ENCODE measurements at regions of chr18 and their contacts with region 1.

Region 1: GRCh38 chr18:3245853-3246634 is 1.6 kb upstream of the MYL12A start:
- DNase-seq: peak; percentile 90 to 95
- ATAC-seq: peak; percentile 65 to 73 (median 70)
- H3K4me3 ChIP-seq: peak overlapping the region; percentile 85
- H3K27ac ChIP-seq: peak overlapping the region; percentile 99
- H3K4me1 ChIP-seq: peaks cover 42% of the 10 kb centered on the region
- H3K27me3 ChIP-seq: no peaks in the 10 kb centered on the region
- CTCF ChIP-seq: peak; percentile 97

Region 2: DNA sequence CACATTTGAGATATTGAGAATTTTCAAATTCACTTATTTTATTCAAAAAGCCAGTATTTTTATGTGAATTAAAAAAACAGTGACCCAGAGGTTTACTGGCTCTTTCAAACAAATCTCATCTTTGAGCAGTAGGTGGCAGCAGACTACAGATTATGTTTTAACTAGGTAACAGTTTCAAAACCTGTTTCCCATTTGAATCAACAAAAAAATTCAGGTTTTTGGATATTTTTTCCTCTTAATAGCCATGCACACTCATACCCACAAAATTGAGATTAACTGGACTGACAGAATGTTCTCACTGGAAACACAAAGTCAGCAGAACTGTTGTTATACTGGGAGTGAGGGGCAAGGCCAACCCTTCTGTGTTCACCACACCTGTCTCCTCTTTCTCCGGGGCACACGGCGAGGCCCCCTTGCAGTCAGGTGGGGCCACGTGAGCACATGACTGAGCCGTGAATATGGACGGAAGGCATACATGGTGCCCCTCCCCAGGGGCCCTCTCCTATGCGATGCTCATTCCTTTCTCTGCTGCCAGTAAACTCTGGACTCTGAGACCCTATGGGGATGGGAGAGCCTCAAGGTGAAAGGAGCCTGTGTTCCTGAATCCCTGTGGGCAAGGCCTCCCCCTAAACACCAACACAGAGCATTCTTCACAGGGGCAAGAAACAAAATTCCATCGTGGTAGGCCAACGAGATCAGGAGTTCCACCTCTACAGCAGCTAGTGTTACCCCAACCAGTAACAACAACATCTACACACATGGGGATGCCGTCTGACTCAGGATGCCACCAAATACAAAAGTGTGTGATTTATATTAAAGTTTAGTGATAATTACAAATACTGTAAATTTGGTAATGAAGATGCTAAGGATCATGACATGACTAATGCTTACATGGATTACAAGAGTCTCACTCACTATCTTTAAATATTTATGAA is 313.5 kb before region 1 on chr18:
- intact Hi-C with region 1: loop called in 1 of 2 experiments (anchors 2 kb)
- DNase-seq: no peak
- ATAC-seq: peak; percentile 49 to 82 (median 62)
- H3K4me3 ChIP-seq: no peak overlapping the region
- H3K27ac ChIP-seq: no peak overlapping the region
- H3K4me1 ChIP-seq: no peaks in the 10 kb centered on the region
- H3K27me3 ChIP-seq: no peaks in the 10 kb centered on the region
- CTCF ChIP-seq: peak; percentile 82

Region 3: GRCh38 chr18:3151399-3152264 is 94.4 kb before region 1 on chr18:
- intact Hi-C with region 1: loop called in 1 of 2 experiments (anchors 5 kb)
- DNase-seq: no peak
- ATAC-seq: peak in 1 of 4 donors; percentile 32
- H3K4me3 ChIP-seq: no peak overlapping the region
- H3K27ac ChIP-seq: no peak overlapping the region
- H3K4me1 ChIP-seq: peaks cover 5% of the 10 kb centered on the region
- H3K27me3 ChIP-seq: no peaks in the 10 kb centered on the region
- CTCF ChIP-seq: peak; percentile 76

Region 4: DNA sequence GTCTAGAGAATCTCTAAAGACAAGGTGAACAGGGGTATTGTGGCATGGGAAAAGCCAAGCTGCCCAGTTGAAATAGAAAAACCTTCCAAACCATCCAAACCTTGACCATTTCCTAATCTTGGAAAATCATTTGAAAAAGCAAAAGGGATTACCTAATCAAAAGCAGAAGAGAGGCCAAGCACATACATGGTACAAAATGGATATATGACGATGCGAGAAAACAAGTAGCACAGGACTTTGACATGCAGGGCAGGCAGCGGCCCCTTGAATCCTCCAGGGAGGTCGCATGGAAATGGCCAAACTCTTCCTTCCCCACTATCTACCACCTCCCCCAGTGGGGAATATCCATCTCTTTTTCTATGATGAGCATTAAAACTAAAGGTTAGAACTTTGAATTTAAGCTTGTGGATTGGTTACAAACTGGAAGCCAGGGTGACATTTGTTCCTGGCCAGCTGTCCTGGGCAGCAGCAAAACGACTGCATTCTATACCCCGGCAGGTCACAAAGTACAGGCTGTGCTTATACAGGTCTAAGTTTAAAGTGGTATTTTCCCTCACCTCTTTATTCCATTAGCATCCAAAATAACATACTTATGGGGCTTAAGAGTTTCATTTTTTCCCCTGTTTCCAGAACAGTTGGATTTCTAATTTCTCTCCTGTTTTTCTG is 51.0 kb before region 1 on chr18:
- intact Hi-C with region 1: loop called in 1 of 2 experiments (anchors 5 kb)
- DNase-seq: peak in 1 of 2 donors; percentile 51
- ATAC-seq: peak; percentile 52 to 80 (median 69)
- H3K4me3 ChIP-seq: peak overlapping the region; percentile 44
- H3K27ac ChIP-seq: peak overlapping the region; percentile 81
- H3K4me1 ChIP-seq: peaks cover 61% of the 10 kb centered on the region
- H3K27me3 ChIP-seq: no peaks in the 10 kb centered on the region
- CTCF ChIP-seq: no peak

Region 5: DNA sequence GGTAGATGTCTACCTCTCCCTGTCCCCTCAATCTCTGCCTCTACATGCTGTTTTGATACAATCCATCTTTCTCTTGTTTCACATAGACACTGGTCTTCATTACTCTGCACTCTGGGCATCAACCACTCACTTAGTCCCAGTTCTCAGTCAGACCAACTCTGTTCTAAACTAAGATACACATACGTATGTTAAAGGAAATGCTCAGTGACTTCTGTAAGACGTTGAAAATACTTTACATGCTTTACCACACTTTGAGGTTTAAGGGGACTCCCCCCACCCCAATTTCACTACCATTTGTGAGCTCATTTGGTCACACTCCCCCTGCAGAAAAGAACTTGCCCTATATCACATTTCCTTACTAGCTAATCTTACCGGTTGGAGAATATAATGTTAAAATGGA is 701.3 kb after region 1 on chr18:
- intact Hi-C with region 1: no loop called
- DNase-seq: no peak
- ATAC-seq: no peak
- H3K4me3 ChIP-seq: no peak overlapping the region
- H3K27ac ChIP-seq: no peak overlapping the region
- H3K4me1 ChIP-seq: no peaks in the 10 kb centered on the region
- H3K27me3 ChIP-seq: no peaks in the 10 kb centered on the region
- CTCF ChIP-seq: no peak

Measured in psoas muscle (tissue), 8 donors.